Activated CD4-positive, alpha-beta T cell treated with anti-CD3 and anti-CD28 coated beads for 36 hours (primary cell): ENCODE measurements at regions of chr19 and their contacts with region 1.

Region 1: DNA sequence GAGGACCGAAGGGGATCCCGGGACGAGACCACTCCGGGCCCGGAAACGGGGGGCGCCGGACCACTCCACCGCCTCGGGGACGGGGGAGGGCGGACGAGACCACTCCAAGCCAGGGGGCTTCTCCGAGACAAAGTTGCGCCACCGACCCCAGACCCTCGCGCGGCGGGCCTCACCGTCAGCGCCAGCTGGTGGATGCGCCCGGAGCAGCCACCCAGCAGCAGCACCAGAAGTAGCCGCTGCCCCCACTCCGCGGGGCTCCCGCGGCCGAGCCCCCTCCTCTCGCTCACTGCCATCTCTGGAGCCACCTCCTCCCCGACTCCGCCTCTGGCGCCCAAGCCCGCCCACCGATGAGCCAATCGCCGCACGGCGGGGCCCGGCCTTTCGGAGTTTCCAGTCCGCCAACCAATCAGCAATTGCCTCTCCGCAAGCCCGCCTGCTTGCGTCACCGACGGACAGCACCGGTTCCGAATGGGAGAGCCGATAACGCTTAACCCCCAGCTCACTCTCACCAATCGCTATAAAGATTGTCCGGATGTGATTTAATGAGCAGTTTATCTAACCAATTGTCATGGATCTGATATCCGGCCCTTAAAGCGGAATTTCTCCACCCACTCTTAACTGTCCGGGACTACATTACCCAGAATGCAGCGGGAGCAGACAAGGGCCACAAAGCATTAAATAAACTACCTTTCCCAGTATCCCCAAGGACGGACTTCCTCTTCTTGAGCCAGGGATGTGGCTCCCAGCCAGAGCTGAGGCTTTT is at the start of gene GPR108:
- DNase-seq: peak; percentile 100
- ATAC-seq: peak; percentile 81
- H3K4me3 Mint-ChIP-seq: peak within 1 kb of the TSS; percentile 89
- H3K27ac Mint-ChIP-seq: peak within 1 kb of the TSS; percentile 98
- H3K4me1 Mint-ChIP-seq: peaks cover 39% of the 10 kb centered on the region
- H3K27me3 Mint-ChIP-seq: no peaks in the 10 kb centered on the region
- total RNA-seq, gene GPR108: 58.8 to 59.9 TPM

Region 2: DNA sequence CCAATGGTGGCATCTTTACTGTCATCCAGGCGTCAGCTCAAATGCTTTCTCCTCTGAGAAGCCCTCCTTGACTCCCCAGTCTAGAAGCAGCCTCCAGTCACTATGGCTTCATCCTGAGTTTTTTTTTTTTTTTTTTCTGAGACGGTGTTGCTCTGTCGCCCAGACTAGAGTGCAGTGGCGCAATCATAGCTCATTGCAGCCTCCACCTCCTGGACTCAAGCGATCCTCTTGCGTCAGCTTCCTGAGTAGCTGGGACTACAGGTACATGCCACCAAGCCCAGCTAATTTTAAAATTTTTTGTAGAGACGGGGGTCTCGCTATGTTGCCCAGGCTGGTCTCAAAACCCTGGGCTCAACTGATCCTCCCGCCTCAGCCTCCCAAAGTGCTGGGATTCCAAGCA is 928.4 kb before region 1 on chr19:
- CTCF ChIA-PET with region 1: no interaction called
- POLR2A ChIA-PET with region 1: no interaction called
- intact Hi-C with region 1: no loop called
- DNase-seq: no peak
- ATAC-seq: no peak
- H3K4me3 Mint-ChIP-seq: no peak overlapping the region
- H3K27ac Mint-ChIP-seq: no peak overlapping the region
- H3K4me1 Mint-ChIP-seq: peaks cover 6% of the 10 kb centered on the region
- H3K27me3 Mint-ChIP-seq: peaks cover 2% of the 10 kb centered on the region

Region 3: GRCh38 chr19:6362027-6362350 is 375.5 kb before region 1 on chr19:
- CTCF ChIA-PET with region 1: no interaction called
- POLR2A ChIA-PET with region 1: no interaction called
- intact Hi-C with region 1: loop called in 1 of 2 experiments (anchors 1 kb)
- DNase-seq: no peak
- ATAC-seq: peak; percentile 1
- H3K4me3 Mint-ChIP-seq: peak overlapping the region; percentile 85
- H3K27ac Mint-ChIP-seq: peak overlapping the region; percentile 91
- H3K4me1 Mint-ChIP-seq: peaks cover 16% of the 10 kb centered on the region
- H3K27me3 Mint-ChIP-seq: no peaks in the 10 kb centered on the region

Region 4: DNA sequence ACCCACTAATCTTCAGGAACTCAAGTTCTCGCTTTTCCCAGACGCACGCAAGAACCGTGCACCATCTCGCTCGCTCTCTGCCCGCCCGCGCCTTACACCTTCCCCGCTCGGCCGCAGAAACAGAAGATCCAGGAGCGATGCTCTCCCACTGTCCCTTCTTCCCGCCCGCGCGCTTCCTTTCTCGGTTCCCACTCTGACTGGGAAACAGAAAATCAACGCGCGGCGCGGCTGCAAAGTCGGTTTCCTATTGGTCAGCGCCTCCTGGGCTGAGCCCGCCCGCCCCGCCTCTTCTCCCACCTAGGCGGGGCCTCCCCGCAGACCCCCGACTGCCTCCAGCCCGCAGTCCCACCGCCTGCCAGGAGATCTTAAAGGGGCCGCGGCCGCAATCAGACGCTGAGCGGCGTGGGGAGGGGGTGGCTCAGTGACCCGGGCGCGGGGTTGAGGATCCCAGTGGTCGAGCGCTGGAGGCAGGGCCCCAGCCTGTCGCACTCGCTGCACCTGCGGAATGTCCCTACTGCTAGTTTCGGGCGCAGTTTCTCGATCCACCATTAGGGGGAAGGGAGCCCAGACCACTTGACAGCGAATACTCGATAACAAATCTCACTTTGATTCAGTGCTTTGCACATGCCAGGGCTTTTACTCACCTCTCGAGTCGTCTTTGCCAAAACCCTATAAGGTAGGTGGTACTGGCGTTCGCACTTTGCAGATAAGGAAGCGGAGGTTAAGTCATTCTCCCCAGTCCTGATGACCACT is 277.2 kb before region 1 on chr19:
- CTCF ChIA-PET with region 1: no interaction called
- POLR2A ChIA-PET with region 1: no interaction called
- intact Hi-C with region 1: loop called in 1 of 2 experiments (anchors 1 kb)
- DNase-seq: peak; percentile 99
- ATAC-seq: peak; percentile 83
- H3K4me3 Mint-ChIP-seq: peak overlapping the region; percentile 78
- H3K27ac Mint-ChIP-seq: peak overlapping the region; percentile 82
- H3K4me1 Mint-ChIP-seq: peaks cover 18% of the 10 kb centered on the region
- H3K27me3 Mint-ChIP-seq: no peaks in the 10 kb centered on the region

Region 5: GRCh38 chr19:6663236-6664201 is 73.9 kb before region 1 on chr19:
- CTCF ChIA-PET with region 1: interaction called, 4 read pairs
- POLR2A ChIA-PET with region 1: interaction called, 3 read pairs
- intact Hi-C with region 1: loop called (anchors 2 kb)
- DNase-seq: peak; percentile 70
- ATAC-seq: peak; percentile 40
- H3K4me3 Mint-ChIP-seq: no peak overlapping the region
- H3K27ac Mint-ChIP-seq: no peak overlapping the region
- H3K4me1 Mint-ChIP-seq: peaks cover 19% of the 10 kb centered on the region
- H3K27me3 Mint-ChIP-seq: no peaks in the 10 kb centered on the region

Region 6: DNA sequence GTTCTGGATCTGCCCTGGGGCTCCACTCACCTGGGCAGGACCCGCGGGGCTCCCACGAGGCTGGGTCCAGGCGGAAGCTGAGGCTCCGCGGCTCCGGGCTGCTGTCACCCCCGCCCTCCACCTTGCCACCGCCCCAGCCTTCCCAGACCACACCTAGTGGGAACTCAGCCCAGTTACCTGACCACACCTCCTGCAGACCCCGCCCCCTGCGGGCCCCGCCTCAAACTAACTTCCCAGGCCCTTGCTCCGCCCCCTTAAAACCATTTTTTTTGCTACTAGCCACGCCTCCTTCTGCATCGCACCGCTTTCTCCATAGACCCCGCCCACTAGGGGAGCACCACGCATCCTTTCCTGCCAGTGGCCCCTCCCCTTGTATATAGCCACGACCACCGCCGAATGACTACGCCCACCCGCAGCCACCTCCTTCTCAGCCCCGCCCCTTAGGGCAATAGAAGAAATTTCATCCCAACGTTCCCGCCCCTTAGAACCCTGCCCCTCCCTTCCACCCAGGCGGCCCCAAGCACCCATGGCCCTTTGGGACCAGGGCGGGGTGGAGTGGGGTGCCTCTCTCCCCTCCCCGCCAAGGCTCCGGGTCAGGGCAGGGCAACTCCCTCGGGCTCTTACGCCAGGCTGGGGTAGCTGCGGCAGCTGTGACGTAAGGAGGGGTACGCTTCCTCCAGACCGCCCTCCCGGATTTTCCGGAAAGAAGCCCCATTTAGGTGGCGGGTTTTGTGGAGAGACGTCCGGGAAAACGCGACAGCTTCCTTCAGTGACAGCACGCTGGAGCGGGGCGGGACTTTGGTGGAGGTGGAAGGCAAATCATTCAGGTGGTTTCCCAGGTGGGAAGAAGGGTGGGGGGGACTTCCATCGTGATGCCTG is 30.1 kb after region 1 on chr19 and contains the start of gene SH2D3A:
- CTCF ChIA-PET with region 1: interaction called, 12 read pairs
- POLR2A ChIA-PET with region 1: interaction called, 6 read pairs
- intact Hi-C with region 1: loop called (anchors 1 kb)
- DNase-seq: peak; percentile 97
- ATAC-seq: peak; percentile 78
- H3K4me3 Mint-ChIP-seq: peak within 1 kb of the TSS; percentile 83
- H3K27ac Mint-ChIP-seq: peak within 1 kb of the TSS; percentile 94
- H3K4me1 Mint-ChIP-seq: peaks cover 42% of the 10 kb centered on the region
- H3K27me3 Mint-ChIP-seq: no peaks in the 10 kb centered on the region
- total RNA-seq, gene SH2D3A: 20.7 to 23.2 TPM

Region 7: GRCh38 chr19:6891761-6892385 is 154.4 kb after region 1 on chr19:
- CTCF ChIA-PET with region 1: interaction called, 5 read pairs
- POLR2A ChIA-PET with region 1: no interaction called
- intact Hi-C with region 1: loop called in 1 of 2 experiments (anchors 1 kb)
- DNase-seq: no peak
- ATAC-seq: no peak
- H3K4me3 Mint-ChIP-seq: peak overlapping the region; percentile 18
- H3K27ac Mint-ChIP-seq: peak overlapping the region; percentile 89
- H3K4me1 Mint-ChIP-seq: peaks cover 79% of the 10 kb centered on the region
- H3K27me3 Mint-ChIP-seq: no peaks in the 10 kb centered on the region

Region 8: GRCh38 chr19:7883796-7884570 is 1146.5 kb after region 1 on chr19:
- CTCF ChIA-PET with region 1: no interaction called
- POLR2A ChIA-PET with region 1: no interaction called
- intact Hi-C with region 1: no loop called
- DNase-seq: no peak
- ATAC-seq: no peak
- H3K4me3 Mint-ChIP-seq: no peak overlapping the region
- H3K27ac Mint-ChIP-seq: no peak overlapping the region
- H3K4me1 Mint-ChIP-seq: no peaks in the 10 kb centered on the region
- H3K27me3 Mint-ChIP-seq: peaks cover 3% of the 10 kb centered on the region